B cell (primary cell): ENCODE measurements at regions of chr12 and their contacts with region 1.

Region 1: DNA sequence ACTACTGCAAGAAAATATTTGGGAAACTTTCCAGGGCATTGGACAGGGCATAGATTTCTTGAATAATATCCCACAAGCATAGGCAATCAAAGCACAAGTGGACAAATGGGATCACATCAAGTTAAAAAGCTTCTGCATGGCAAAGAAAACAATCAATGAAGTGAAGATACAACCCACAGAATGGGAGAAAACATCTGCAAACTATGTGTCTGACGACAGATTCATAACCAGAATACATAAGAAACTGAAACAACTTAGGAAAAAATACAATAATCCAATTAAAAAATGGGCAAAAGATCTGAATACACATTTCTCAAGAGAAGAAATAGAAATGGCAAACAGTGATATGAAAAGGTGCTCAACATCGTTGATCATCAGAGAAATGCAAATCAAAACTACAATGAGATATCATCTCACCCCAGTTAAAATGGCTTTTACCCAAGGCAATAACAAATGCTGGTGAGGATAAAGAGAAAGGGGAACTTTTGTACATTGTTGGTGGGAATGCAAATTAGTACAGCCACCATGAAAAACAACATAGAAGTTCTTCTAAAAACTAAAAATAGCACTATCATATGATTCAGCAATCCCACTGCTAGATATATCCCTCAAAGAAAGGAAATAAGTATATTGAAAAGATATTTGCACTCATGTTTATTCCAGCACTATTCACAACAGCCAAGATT is 33.8 kb upstream of the ATP2B1 start:
- DNase-seq: peak; percentile 65
- ATAC-seq: peak; percentile 92
- H3K4me3 ChIP-seq: peak overlapping the region in 2 of 5 experiments; percentile 21 to 48
- H3K4me3 Mint-ChIP-seq: peak overlapping the region; percentile 70
- H3K27ac ChIP-seq: peak overlapping the region; percentile 18 to 72
- H3K27ac Mint-ChIP-seq: peak overlapping the region; percentile 91
- H3K4me1 ChIP-seq: peaks cover 12 to 14% of the 10 kb centered on the region in 2 donors
- H3K4me1 Mint-ChIP-seq: peaks cover 20% of the 10 kb centered on the region
- H3K27me3 ChIP-seq: no peaks in the 10 kb centered on the region
- H3K27me3 Mint-ChIP-seq: no peaks in the 10 kb centered on the region
- CTCF ChIP-seq: no peak

Region 2: DNA sequence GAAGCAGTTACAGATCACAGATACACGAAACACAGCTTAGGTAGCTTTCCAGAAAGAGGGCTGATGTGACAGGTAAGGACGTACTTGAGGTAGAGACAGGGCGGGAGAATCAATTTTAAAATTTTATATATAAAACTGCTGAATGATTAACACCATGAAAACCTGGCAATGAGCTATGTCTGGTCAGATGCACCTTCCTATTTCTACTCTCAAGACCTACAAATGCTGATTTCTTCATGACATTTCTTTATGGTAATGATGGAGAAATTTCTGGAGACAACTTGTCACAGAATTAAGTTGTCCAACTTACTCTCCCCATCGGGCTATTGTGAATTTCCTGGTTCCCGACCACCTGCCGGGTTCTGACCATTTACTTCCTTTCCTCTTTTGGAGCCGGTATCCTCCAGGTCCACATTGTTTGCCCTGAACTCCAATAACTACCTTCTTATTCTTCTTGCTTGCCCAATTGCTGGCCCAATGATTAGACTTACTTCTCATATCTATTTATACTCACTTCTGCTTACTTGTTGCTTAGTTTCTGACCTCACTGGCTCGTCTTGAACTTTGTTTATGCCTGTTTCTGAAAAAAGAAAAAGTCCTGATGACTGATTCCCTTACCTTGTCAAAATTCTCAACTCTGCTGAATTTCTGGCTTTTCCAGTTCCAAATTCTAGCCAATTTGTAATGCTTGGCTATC is 21.0 kb before region 1 on chr12:
- CTCF ChIA-PET with region 1: no interaction called
- POLR2A ChIA-PET with region 1: no interaction called
- intact Hi-C with region 1: loop called (anchors 2 kb)
- DNase-seq: peak; percentile 78
- ATAC-seq: peak; percentile 94
- H3K4me3 ChIP-seq: peak overlapping the region; percentile 2 to 46 (median 12)
- H3K4me3 Mint-ChIP-seq: peak overlapping the region; percentile 74
- H3K27ac ChIP-seq: peak overlapping the region; percentile 71 to 91
- H3K27ac Mint-ChIP-seq: peak overlapping the region; percentile 93
- H3K4me1 ChIP-seq: peaks cover 20 to 28% of the 10 kb centered on the region in 2 donors
- H3K4me1 Mint-ChIP-seq: peaks cover 39% of the 10 kb centered on the region
- H3K27me3 ChIP-seq: no peaks in the 10 kb centered on the region
- H3K27me3 Mint-ChIP-seq: no peaks in the 10 kb centered on the region
- CTCF ChIP-seq: no peak

Region 3: GRCh38 chr12:89731614-89732013 is 10.9 kb before region 1 on chr12:
- CTCF ChIA-PET with region 1: no interaction called
- POLR2A ChIA-PET with region 1: no interaction called
- intact Hi-C with region 1: no loop called
- DNase-seq: no peak
- ATAC-seq: no peak
- H3K4me3 ChIP-seq: no peak overlapping the region
- H3K4me3 Mint-ChIP-seq: no peak overlapping the region
- H3K27ac ChIP-seq: no peak overlapping the region
- H3K27ac Mint-ChIP-seq: no peak overlapping the region
- H3K4me1 ChIP-seq: peaks cover 4% of the 10 kb centered on the region in 2 donors
- H3K4me1 Mint-ChIP-seq: peaks cover 16% of the 10 kb centered on the region
- H3K27me3 ChIP-seq: no peaks in the 10 kb centered on the region
- H3K27me3 Mint-ChIP-seq: no peaks in the 10 kb centered on the region
- CTCF ChIP-seq: no peak

Region 4: DNA sequence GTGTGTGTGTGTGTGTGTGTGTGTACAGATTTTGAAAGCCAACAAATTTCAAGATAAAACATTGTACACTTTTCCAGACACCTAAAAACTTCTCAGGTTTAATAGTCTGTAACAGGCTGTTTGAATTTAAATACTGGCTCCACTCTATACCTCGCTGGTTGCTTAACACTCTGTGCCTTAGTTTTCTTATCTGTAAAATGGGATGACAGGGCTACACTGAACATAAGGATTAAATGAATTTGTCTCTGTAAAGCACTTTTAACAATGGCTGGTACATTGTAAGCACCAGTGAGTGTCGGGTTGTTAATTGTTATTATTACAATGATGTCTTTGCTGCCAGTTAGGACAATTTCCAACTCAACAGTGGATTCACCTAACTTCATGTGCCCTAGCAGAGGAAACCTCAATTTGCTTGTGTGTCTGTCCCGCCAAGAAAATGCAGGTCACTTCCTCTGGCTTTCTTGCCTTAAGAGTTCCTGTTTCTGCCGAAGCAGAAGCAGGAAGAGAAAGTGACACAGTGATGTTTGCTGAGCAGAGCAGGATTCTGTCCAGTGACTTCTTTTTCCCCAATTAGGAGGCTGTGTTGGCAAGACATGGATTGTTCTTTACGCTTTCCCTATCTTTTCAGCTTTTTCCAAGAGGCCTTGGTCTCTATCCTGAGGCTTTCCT is 120.2 kb after region 1 on chr12:
- CTCF ChIA-PET with region 1: no interaction called
- POLR2A ChIA-PET with region 1: no interaction called
- intact Hi-C with region 1: no loop called
- DNase-seq: peak; percentile 88
- ATAC-seq: peak; percentile 68
- H3K4me3 ChIP-seq: peak overlapping the region; percentile 23 to 65 (median 44)
- H3K4me3 Mint-ChIP-seq: peak overlapping the region; percentile 86
- H3K27ac ChIP-seq: peak overlapping the region; percentile 92 to 96
- H3K27ac Mint-ChIP-seq: peak overlapping the region; percentile 98
- H3K4me1 ChIP-seq: peaks cover 58 to 65% of the 10 kb centered on the region in 2 donors
- H3K4me1 Mint-ChIP-seq: peaks cover 68% of the 10 kb centered on the region
- H3K27me3 ChIP-seq: no peaks in the 10 kb centered on the region
- H3K27me3 Mint-ChIP-seq: no peaks in the 10 kb centered on the region
- CTCF ChIP-seq: no peak